Natural killer cell (primary cell): ENCODE measurements at regions of chr1 and their contacts with region 1.

Region 1: GRCh38 chr1:63691701-63692425 is 82.0 kb upstream of the ROR1 start:
- DNase-seq: peak in 1 of 2 donors; percentile 61
- ATAC-seq: peak; percentile 52 to 78 (median 55)
- H3K4me3 ChIP-seq: no peak overlapping the region
- H3K4me3 Mint-ChIP-seq: no peak overlapping the region
- H3K27ac ChIP-seq: no peak overlapping the region
- H3K27ac Mint-ChIP-seq: no peak overlapping the region
- H3K4me1 ChIP-seq: no peaks in the 10 kb centered on the region
- H3K4me1 Mint-ChIP-seq: peaks cover 0 to 5% of the 10 kb centered on the region in 2 donors
- H3K27me3 ChIP-seq: no peaks in the 10 kb centered on the region
- H3K27me3 Mint-ChIP-seq: peaks cover 0 to 6% of the 10 kb centered on the region in 2 donors
- CTCF ChIP-seq: peak; percentile 59

Region 2: DNA sequence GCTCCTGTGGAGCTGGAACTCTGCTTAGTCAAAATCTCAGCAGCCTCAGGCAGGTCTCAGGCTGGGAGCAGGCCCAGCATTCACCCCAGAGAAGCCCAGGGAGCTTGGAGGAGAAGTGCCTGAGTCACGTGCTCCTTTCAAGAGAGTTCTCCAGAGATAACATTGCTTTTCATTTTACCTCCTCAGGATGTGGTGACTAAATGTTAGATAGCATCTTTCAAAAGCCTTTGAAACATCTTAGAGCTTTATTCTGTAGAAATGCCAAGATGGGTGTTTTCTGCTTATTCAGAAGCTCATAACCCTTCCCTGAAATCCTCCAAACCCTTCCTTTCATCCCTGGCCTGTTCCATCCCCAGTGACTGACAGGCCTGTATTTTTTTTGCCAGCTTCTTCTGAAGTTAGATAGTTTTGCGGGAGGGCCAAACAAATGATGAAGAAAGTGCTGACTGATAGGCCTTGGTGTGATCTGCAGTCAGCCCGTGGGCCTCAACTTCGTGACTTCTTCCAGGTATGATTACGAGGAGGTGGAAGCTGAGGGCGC is 40.6 kb before region 1 on chr1:
- intact Hi-C with region 1: no loop called
- DNase-seq: peak in 1 of 2 donors; percentile 64
- ATAC-seq: peak in 1 of 3 donors; percentile 50
- H3K4me3 ChIP-seq: no peak overlapping the region
- H3K4me3 Mint-ChIP-seq: no peak overlapping the region
- H3K27ac ChIP-seq: no peak overlapping the region
- H3K27ac Mint-ChIP-seq: no peak overlapping the region
- H3K4me1 ChIP-seq: no peaks in the 10 kb centered on the region
- H3K4me1 Mint-ChIP-seq: no peaks in the 10 kb centered on the region
- H3K27me3 ChIP-seq: no peaks in the 10 kb centered on the region
- H3K27me3 Mint-ChIP-seq: no peaks in the 10 kb centered on the region
- CTCF ChIP-seq: no peak

Region 3: DNA sequence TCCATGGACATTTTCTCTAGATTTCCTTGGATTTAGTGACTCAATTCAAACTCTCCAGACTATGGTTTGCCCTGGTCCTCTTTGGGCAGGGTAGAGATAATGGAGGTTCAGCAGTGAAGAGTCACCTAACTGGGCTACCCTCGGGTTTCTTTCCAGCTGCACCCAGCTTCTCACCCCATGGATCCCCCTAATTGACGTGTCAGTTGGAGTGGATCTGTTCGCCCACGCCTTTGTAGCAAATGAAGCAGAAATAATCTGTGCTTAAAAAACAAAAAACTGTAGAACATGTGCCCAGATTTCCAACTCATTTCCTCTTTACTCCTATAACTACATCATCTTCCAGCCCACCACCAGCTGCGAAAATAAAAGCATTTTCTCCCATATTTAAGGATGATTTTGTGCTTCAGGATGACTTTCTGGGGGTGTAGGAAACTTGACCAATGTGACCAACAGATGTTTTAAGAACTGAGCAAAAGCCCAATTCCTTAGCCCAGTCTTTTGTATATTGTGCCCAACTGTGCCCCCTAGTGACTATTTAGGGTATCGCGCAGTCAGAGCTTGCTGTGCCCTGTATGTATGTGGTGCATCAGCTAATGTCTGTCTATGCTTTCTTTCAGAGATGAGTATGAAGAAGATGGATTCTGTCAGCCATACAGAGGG is 445.0 kb after region 1 on chr1:
- intact Hi-C with region 1: loop called (anchors 1 kb)
- DNase-seq: peak; percentile 43 to 78
- ATAC-seq: peak; percentile 70 to 88 (median 75)
- H3K4me3 ChIP-seq: no peak overlapping the region
- H3K4me3 Mint-ChIP-seq: no peak overlapping the region
- H3K27ac ChIP-seq: no peak overlapping the region
- H3K27ac Mint-ChIP-seq: no peak overlapping the region
- H3K4me1 ChIP-seq: no peaks in the 10 kb centered on the region
- H3K4me1 Mint-ChIP-seq: no peaks in the 10 kb centered on the region
- H3K27me3 ChIP-seq: no peaks in the 10 kb centered on the region
- H3K27me3 Mint-ChIP-seq: peaks cover 5 to 17% of the 10 kb centered on the region in 2 donors
- CTCF ChIP-seq: peak; percentile 78

Region 4: DNA sequence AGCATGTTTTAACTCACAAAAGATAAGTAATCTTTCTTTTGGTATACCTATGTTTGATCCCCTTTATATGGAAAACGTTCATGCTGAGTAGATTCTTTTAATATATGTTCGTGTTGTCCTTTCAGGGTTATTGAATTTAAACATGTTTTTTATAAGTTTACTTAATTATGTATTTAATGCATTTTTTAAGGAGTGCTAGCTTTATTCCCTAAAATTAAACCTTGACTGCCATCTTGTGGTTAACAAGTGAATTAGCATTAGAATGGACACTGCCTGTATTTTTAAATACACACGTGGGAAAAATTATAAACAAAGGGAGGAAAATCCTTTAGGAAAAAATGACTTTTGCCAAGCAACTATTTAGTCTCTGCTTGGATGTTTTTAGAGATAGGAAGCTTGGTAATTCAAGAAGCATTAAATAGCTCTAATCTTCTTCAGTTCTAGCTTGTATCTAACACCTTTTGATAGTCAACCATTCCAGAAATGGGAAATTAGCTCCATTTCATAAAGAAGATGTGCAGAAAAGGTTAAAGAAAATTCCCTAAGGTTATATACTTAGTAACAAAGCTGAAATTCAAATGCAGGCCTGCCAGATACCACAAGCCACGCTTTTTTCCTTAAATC is 554.5 kb after region 1 on chr1:
- intact Hi-C with region 1: loop called (anchors 2 kb)
- DNase-seq: peak in 1 of 2 donors; percentile 60
- ATAC-seq: peak in 1 of 3 donors; percentile 37
- H3K4me3 ChIP-seq: no peak overlapping the region
- H3K4me3 Mint-ChIP-seq: no peak overlapping the region
- H3K27ac ChIP-seq: no peak overlapping the region
- H3K27ac Mint-ChIP-seq: no peak overlapping the region
- H3K4me1 ChIP-seq: no peaks in the 10 kb centered on the region
- H3K4me1 Mint-ChIP-seq: peaks cover 11% of the 10 kb centered on the region in 2 donors
- H3K27me3 ChIP-seq: peaks cover 6% of the 10 kb centered on the region
- H3K27me3 Mint-ChIP-seq: peaks cover 6 to 15% of the 10 kb centered on the region in 2 donors
- CTCF ChIP-seq: peak; percentile 79